CD8-positive, alpha-beta T cell (primary cell): ENCODE measurements at regions of chr17 and their contacts with region 1.

Region 1: DNA sequence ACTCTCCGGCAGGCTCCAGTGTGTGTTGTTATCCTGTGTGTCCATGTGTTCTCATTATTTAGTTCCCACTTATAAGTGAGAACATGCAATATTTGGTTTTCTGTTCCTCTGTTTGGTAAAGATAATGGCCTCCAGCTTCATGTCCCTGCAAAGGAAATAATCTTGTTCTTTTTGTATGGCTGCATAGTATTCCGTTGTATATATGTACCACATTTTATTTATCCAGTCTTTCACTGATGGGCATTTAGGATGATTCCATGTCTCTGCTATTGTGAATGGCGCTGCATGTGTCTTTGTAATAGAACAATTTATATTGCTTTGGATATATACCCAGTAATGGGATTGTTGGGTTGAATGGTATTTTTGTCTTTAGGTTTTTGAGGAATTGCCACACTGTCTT is 807.3 kb upstream of the CA10 start:
- DNase-seq: no peak
- ATAC-seq: no peak
- H3K4me3 ChIP-seq: no peak overlapping the region
- H3K4me3 Mint-ChIP-seq: no peak overlapping the region
- H3K27ac ChIP-seq: no peak overlapping the region
- H3K27ac Mint-ChIP-seq: no peak overlapping the region
- H3K4me1 ChIP-seq: no peaks in the 10 kb centered on the region
- H3K4me1 Mint-ChIP-seq: no peaks in the 10 kb centered on the region
- H3K27me3 ChIP-seq: no peaks in the 10 kb centered on the region
- H3K27me3 Mint-ChIP-seq: no peaks in the 10 kb centered on the region
- CTCF ChIP-seq: no peak

Region 2: GRCh38 chr17:53032861-53033271 is 67.0 kb after region 1 on chr17:
- CTCF ChIA-PET with region 1: no interaction called
- POLR2A ChIA-PET with region 1: no interaction called
- intact Hi-C with region 1: loop called in 1 of 2 experiments (anchors 10 kb)
- DNase-seq: no peak
- ATAC-seq: no peak
- H3K4me3 ChIP-seq: no peak overlapping the region
- H3K4me3 Mint-ChIP-seq: no peak overlapping the region
- H3K27ac ChIP-seq: no peak overlapping the region
- H3K27ac Mint-ChIP-seq: no peak overlapping the region
- H3K4me1 ChIP-seq: no peaks in the 10 kb centered on the region
- H3K4me1 Mint-ChIP-seq: no peaks in the 10 kb centered on the region
- H3K27me3 ChIP-seq: no peaks in the 10 kb centered on the region
- H3K27me3 Mint-ChIP-seq: no peaks in the 10 kb centered on the region
- CTCF ChIP-seq: no peak